Breast epithelium (tissue), 4 donors: ENCODE measurements at regions of chr14 and their contacts with region 1.

Region 1: GRCh38 chr14:93464271-93464670 is 33.5 kb downstream of the UNC79 start:
- DNase-seq: no peak
- H3K4me3 ChIP-seq: no peak overlapping the region
- H3K27ac ChIP-seq: no peak overlapping the region
- H3K4me1 ChIP-seq: no peaks in the 10 kb centered on the region
- H3K27me3 ChIP-seq: no peaks in the 10 kb centered on the region
- CTCF ChIP-seq: no peak
- POLR2A ChIP-seq: no peak

Region 2: DNA sequence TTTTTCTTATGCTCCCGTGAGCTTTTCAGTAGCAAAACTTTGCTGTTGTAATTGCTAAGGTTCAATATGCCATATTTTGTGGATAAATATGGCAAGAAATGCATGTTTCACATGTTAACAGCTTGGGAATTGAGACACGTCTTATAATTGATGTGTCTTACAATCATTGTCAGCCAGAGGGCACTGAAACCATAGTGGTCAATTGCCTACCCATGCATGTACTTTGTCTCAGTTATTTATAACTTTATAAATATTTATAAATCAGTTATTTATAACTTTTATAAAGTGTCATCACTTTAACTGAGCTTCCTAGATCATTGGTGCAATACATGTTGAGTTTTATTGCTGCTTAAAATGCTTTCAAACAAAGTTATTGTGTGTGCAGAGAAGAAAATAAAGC is 1814.3 kb before region 1 on chr14:
- intact Hi-C with region 1: loop called (anchors 10 kb)
- DNase-seq: no peak
- H3K4me3 ChIP-seq: no peak overlapping the region
- H3K27ac ChIP-seq: no peak overlapping the region
- H3K4me1 ChIP-seq: no peaks in the 10 kb centered on the region
- H3K27me3 ChIP-seq: no peaks in the 10 kb centered on the region
- CTCF ChIP-seq: peak in 2 of 3 donors; percentile 62 to 68
- POLR2A ChIP-seq: no peak